Activated T-helper 1 cell treated with anti-CD3 and anti-CD28 coated beads, Interleukin-12 subunit alpha, Interleukin-12 subunit beta, Interleukin-2, Interleukin-4 antibody, amounts not matched to agents 30 ng/mL and 10 ng/mL and 1 ng/mL, durations not matched to agents 14 hours and 24 hours and 36 hours (primary cell): ENCODE measurements at regions of chr2 and their contacts with region 1.

Region 1: GRCh38 chr2:174682578-174683391 is 81.5 kb downstream of the CHRNA1 start:
- DNase-seq: peak; percentile 57
- H3K4me3 Mint-ChIP-seq: peak overlapping the region; percentile 96
- H3K27ac Mint-ChIP-seq: peak overlapping the region; percentile 95
- H3K4me1 Mint-ChIP-seq: peaks cover 74% of the 10 kb centered on the region
- H3K27me3 Mint-ChIP-seq: no peaks in the 10 kb centered on the region

Region 2: DNA sequence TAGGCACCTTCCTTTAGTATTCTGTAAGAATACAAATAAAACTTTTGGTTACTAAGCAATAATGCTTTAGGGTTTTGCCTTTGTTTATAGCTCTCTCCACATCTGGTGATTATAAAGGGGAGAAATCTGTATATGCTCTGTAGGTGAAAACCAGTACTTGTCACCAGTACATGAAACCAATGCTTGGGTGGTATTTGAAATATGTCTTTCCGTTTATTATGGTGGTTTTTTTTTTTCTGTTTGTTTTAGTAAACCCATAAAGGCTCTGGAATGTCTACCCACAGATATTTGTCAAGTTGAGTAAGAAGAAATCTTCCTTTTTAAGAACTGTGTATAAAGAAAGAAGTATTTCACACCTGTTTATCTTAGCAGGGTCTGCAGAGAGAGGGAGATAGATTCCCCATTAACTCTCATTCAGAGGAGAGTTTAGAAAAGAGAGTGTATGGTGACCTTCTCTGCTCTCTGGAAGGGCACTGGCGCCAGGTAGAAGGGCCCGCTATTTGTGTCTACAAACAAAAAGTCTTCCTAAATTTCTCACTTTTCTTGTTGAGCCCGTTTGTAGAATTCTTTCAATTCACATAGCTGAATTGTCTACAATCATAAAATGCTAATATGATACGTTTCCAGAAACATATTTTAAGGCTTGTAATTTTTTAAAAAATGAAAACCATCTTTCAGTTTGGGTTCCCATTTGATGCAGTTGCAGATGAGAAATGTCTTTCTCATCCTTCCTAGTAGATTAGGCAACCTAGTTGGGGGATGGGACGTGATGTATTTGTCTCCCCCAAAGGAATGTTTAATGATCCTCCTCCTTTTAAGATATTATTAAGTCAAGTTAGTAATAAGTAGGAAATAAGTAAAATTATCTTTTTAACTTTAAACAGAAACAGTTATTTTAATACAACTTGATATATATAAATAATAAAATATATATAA is 1573.3 kb before region 1 on chr2:
- intact Hi-C with region 1: no loop called
- DNase-seq: no peak
- H3K4me3 Mint-ChIP-seq: no peak overlapping the region
- H3K27ac Mint-ChIP-seq: no peak overlapping the region
- H3K4me1 Mint-ChIP-seq: peaks cover 5% of the 10 kb centered on the region
- H3K27me3 Mint-ChIP-seq: peaks cover 15% of the 10 kb centered on the region

Region 3: DNA sequence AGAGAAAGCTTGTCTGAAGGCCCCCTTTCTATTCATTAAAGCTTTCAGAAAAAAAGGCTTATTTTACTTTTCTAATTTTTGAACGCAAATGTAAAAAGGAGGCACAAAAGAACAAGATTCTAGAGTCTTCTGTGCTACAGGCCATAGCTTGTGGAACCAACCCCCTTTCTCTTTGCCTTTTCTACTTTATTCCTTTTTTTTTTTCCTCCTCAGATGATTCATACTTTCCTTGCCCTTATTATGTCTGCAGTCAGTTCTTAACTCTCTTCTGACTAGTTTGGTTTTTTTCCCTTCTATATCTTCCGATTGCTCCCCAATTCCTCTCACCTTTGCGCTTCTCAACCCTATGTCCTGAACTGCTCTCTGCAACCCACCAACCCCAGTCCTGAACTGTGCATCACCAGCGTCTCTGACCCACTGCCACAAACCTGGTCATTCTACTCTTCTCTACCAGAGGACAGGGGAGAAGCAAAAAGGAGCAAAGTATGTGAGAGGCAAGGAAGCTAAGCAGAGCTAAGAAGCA is 28.3 kb before region 1 on chr2:
- intact Hi-C with region 1: loop called (anchors 2 kb)
- DNase-seq: no peak
- H3K4me3 Mint-ChIP-seq: no peak overlapping the region
- H3K27ac Mint-ChIP-seq: peak overlapping the region; percentile 71
- H3K4me1 Mint-ChIP-seq: peaks cover 55% of the 10 kb centered on the region
- H3K27me3 Mint-ChIP-seq: no peaks in the 10 kb centered on the region